BJ (cell line): ENCODE measurements at regions of chr12 and their contacts with region 1.

Region 1: DNA sequence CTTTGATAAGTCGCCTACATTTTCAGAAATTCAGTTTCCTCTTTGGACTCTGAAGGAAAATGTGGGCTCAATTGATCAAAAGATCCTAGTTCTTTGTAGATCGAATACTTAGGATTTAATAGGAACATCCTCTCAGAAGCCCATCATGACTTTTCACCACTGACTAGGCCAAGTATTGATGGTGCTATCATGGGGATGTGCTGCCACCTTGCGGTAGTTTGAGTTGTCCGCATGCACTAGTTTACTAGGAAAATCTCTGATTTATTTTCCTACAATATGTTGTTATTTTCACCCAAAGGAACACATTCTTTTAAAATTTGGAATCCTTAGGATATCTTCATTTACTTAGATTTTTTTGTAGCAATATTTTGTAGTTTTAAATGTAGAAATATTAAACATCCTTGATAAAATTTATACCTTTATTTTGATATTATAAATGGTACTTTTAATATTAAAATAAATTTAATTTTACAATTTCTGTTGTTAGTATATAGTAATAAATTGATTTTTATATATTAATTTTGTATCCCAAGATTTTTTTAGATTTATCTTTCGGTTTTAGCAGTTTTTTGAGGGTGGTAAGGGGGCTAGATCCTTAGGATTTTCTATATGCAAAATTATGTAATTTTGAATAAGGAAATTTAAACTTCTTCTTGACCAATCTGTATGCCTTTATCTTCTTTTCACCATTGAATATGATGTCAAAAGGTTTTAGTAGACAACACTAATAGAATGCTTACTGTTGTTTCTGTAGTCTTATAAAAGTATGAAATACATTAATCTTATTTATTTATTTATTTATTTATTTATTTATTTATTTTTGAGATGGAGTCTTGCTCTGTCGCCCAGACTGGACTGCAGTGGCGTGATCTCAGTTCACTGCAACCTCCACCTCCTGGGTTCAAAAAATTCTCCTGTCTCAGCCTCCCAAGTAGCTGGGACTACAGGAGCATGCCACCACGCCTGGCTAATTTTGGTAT is 52.9 kb upstream of the OR9K2 start:
- DNase-seq: no peak
- H3K4me3 ChIP-seq: no peak overlapping the region
- H3K27me3 ChIP-seq: no peaks in the 10 kb centered on the region
- CTCF ChIP-seq: peak; percentile 88

Region 2: GRCh38 chr12:54941659-54942058 is 131.7 kb before region 1 on chr12:
- CTCF ChIA-PET with region 1: no interaction called
- POLR2A ChIA-PET with region 1: no interaction called
- DNase-seq: no peak
- H3K4me3 ChIP-seq: no peak overlapping the region
- H3K27me3 ChIP-seq: 0 out of 2 replicates have a peak, but pooled peaks cover 2% of the 10 kb centered on the region
- CTCF ChIP-seq: no peak

Region 3: GRCh38 chr12:55043542-55043941 is 29.8 kb before region 1 on chr12:
- CTCF ChIA-PET with region 1: interaction called, 16 read pairs
- POLR2A ChIA-PET with region 1: no interaction called
- DNase-seq: no peak
- H3K4me3 ChIP-seq: no peak overlapping the region
- H3K27me3 ChIP-seq: no peaks in the 10 kb centered on the region
- CTCF ChIP-seq: no peak

Region 4: DNA sequence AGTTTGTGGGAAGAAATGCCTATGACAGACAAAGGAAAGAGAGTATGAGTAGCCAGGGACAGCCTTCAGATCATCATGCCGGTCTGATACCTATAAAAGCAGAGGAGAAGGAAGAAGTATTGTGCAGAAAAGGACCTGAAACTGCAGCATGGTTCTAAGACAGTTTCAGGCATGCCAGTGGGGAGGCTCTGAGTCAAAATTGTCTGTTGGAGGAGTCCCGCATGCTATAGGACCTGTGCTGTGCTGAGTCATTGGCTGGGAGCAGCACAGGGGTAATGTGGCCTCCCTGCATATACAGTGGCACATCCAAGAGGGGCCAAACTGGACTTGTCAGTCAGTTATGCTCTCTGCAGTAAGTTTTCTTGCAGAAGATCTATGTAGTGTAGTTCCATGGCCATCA is 12.9 kb before region 1 on chr12:
- CTCF ChIA-PET with region 1: interaction called, 24 read pairs
- POLR2A ChIA-PET with region 1: no interaction called
- DNase-seq: no peak
- H3K4me3 ChIP-seq: no peak overlapping the region
- H3K27me3 ChIP-seq: no peaks in the 10 kb centered on the region
- CTCF ChIP-seq: no peak